ENCODE measurements at regions of chr2 and their contacts with region 1.

Region 1: GRCh38 chr2:64330281-64331113 is 123.5 kb upstream of the LGALSL start:
- DNase-seq: peak; percentile 81
- H3K4me3 Mint-ChIP-seq: peak overlapping the region; percentile 49
- H3K27ac Mint-ChIP-seq: peak overlapping the region; percentile 64
- H3K4me1 Mint-ChIP-seq: peaks cover 6% of the 10 kb centered on the region
- H3K27me3 Mint-ChIP-seq: no peaks in the 10 kb centered on the region
- CTCF ChIP-seq: peak; percentile 94

Region 2: DNA sequence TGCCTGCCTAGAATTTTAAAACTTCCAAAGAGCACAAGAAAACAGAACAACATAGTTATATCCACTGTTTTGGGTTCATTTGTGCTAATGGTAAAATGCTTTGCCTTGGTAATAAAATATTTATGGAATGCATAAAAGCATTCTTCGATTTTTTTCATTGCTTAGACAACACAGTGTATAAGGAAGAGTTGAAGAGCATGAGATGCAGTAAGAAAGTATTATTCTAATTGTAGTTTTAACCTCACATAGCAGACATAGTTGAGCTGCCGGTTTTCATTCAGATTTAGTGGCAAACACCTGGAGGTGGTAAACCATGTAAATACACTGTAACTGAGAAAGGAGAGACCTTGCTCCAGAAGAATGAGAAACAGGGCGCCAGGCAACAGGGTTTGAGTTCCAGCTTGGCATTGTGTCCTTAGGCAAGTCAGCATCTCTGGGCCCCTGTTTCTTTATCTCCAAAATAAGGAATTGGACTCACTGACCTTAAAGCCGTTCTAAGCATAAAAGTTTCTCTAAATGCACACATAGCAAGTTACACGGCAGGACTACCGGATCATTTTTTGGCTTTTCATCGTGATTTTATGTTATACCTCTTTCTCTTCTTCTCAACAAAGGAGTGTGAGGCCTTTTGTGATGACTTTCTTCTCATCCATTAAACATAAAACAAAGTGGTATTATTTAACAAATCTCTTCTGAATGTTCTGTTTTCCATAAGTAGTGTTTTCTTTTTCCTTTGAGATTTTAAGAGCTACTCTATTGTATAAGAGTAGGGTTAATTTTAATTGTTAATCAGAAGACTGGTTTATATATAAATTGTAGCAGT is 480.9 kb before region 1 on chr2:
- CTCF ChIA-PET with region 1: no interaction called
- POLR2A ChIA-PET with region 1: no interaction called
- intact Hi-C with region 1: no loop called
- DNase-seq: no peak
- H3K4me3 Mint-ChIP-seq: no peak overlapping the region
- H3K27ac Mint-ChIP-seq: peak overlapping the region; percentile 91
- H3K4me1 Mint-ChIP-seq: peaks cover 55% of the 10 kb centered on the region
- H3K27me3 Mint-ChIP-seq: no peaks in the 10 kb centered on the region
- CTCF ChIP-seq: no peak

Region 3: GRCh38 chr2:64162516-64162915 is 168.0 kb before region 1 on chr2:
- CTCF ChIA-PET with region 1: no interaction called
- POLR2A ChIA-PET with region 1: no interaction called
- intact Hi-C with region 1: no loop called
- DNase-seq: no peak
- H3K4me3 Mint-ChIP-seq: no peak overlapping the region
- H3K27ac Mint-ChIP-seq: no peak overlapping the region
- H3K4me1 Mint-ChIP-seq: peaks cover 7% of the 10 kb centered on the region
- H3K27me3 Mint-ChIP-seq: no peaks in the 10 kb centered on the region
- CTCF ChIP-seq: no peak

Region 4: GRCh38 chr2:64311948-64312621 is 18.4 kb before region 1 on chr2:
- CTCF ChIA-PET with region 1: interaction called, 48 read pairs
- POLR2A ChIA-PET with region 1: no interaction called
- intact Hi-C with region 1: no loop called
- DNase-seq: peak; percentile 96
- H3K4me3 Mint-ChIP-seq: no peak overlapping the region
- H3K27ac Mint-ChIP-seq: peak overlapping the region; percentile 39
- H3K4me1 Mint-ChIP-seq: peaks cover 23% of the 10 kb centered on the region
- H3K27me3 Mint-ChIP-seq: no peaks in the 10 kb centered on the region
- CTCF ChIP-seq: peak; percentile 56

Region 5: DNA sequence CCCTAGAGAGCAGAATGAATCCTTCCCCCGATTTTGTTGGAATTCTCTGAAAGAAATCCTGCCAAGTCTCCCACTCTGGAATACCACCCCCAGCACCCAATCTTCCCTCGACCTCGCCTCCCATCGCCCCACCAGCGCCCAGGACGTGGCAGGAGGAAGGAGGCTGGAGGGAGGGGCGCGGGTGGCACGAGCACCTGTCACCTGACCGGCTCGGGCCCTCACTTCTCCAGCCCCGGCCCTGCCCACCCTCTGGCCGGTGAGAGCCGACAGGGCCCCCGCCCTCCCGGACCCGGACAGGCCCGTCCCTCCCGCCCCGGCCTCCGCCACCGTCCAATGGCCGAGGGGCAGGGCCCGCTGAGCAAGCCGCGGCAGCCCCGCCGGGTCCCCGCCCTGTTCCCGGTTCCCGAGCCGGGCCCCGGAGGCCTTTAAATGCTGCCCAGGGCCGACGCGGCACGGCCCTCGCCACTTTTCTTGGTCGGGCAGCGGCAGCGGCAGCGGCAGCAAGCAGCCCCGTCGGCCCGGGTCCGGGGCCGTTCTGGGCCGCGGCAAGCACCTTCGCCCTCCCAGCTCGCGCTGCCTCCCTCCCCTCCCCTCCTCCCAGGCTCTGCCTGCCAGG is 123.4 kb after region 1 on chr2 and contains the start of gene LGALSL:
- CTCF ChIA-PET with region 1: interaction called, 18 read pairs
- POLR2A ChIA-PET with region 1: interaction called, 6 read pairs
- intact Hi-C with region 1: no loop called
- DNase-seq: peak; percentile 66
- H3K4me3 Mint-ChIP-seq: peak within 1 kb of the TSS; percentile 75
- H3K27ac Mint-ChIP-seq: peak within 1 kb of the TSS; percentile 86
- H3K4me1 Mint-ChIP-seq: peaks cover 16% of the 10 kb centered on the region
- H3K27me3 Mint-ChIP-seq: no peaks in the 10 kb centered on the region
- CTCF ChIP-seq: no peak
- total RNA-seq, gene LGALSL: 11.4 and 13.5 TPM in 2 replicates

Region 6: DNA sequence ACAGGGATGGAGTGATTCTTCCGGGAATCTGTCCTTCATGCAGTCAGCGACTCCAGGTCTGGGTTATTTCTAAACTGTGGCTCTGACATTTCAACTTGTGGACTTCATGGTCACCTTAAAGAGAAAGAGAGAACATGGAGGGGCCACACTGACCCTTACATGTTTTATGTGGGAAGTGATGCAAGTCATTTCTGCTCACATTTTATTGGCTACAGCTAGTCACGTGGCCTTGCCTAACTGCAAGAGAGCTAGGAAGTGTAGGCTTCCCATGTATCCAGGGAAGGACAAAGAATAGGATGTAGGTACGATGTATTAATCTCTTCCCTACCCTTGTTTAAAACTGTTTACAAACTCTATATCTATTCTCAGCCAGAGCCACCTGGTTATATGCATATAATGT is 163.3 kb after region 1 on chr2:
- CTCF ChIA-PET with region 1: interaction called, 257 read pairs
- POLR2A ChIA-PET with region 1: no interaction called
- intact Hi-C with region 1: loop called (anchors 1 kb)
- DNase-seq: no peak
- H3K4me3 Mint-ChIP-seq: no peak overlapping the region
- H3K27ac Mint-ChIP-seq: no peak overlapping the region
- H3K4me1 Mint-ChIP-seq: peaks cover 9% of the 10 kb centered on the region
- H3K27me3 Mint-ChIP-seq: peaks cover 11% of the 10 kb centered on the region
- CTCF ChIP-seq: no peak

Region 7: DNA sequence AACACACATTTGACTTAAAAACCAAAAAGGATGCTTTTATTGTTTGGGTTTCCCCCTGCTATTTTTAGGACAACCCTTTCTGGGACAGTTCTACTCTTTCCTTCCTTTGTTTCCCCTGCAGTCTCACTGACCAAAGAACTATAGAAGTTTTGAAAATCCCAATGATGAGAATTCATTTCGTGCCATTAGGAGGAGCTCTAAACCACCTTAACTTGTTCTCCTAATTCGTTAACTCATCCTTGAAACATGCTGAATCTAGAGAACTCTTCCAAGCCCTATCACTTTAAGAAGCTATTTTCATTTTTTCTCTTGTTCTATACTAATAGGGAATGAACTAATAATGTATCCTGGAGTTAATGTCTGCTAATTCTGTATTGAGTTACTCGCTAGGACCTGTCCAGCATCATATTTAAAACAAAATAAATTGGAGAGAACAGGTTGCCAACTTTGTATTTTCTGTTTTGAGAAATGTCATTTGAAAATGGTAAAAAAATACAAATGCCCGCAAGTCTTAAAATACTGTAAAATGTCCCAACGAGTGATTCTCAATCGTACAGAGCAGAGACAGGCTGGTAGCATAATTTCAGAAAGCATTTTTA is 256.5 kb after region 1 on chr2:
- CTCF ChIA-PET with region 1: interaction called, 11 read pairs
- POLR2A ChIA-PET with region 1: interaction called, 5 read pairs
- intact Hi-C with region 1: no loop called
- DNase-seq: peak; percentile 59
- H3K4me3 Mint-ChIP-seq: no peak overlapping the region
- H3K27ac Mint-ChIP-seq: peak overlapping the region; percentile 57
- H3K4me1 Mint-ChIP-seq: no peaks in the 10 kb centered on the region
- H3K27me3 Mint-ChIP-seq: no peaks in the 10 kb centered on the region
- CTCF ChIP-seq: peak; percentile 67

Region 8: DNA sequence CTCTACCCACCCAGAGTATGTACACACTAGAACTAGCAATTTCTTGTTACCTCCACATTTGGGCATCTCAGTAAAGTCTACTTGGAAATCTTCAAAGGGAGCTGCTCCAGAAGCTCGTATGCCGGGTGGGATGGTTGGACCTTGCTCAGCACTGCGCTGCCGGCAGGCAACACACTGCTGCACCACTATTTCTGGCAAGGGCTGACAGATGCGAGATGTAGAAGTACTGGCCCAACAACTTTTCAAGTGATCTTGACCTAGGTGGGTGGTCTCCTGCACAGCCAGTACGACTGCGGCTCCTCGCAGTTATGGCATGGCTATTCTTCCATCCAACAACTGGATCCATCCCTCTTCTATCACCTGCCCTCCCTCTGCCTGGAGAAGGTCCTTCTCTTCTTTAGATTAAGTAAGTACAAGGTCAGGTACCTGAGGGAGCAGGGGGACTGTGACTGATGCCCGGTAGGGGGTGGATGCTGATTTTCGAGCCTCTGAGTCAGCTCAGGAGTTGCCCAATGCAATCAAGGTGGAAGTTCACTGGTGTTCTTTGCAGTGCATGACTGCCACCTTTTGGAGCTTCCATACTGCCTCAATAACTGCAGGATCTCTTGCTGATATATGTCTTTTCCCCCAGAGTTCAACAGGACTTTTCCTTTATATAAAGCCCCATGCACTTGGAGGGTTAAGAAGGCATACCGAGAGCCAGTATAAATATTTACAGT is 558.3 kb after region 1 on chr2:
- CTCF ChIA-PET with region 1: interaction called, 6 read pairs
- POLR2A ChIA-PET with region 1: interaction called, 3 read pairs
- intact Hi-C with region 1: loop called (anchors 1 kb)
- DNase-seq: peak; percentile 88
- H3K4me3 Mint-ChIP-seq: no peak overlapping the region
- H3K27ac Mint-ChIP-seq: no peak overlapping the region
- H3K4me1 Mint-ChIP-seq: no peaks in the 10 kb centered on the region
- H3K27me3 Mint-ChIP-seq: peaks cover 25% of the 10 kb centered on the region
- CTCF ChIP-seq: peak; percentile 55